ENCODE measurements at regions of chr1 and their contacts with region 1.

Region 1: DNA sequence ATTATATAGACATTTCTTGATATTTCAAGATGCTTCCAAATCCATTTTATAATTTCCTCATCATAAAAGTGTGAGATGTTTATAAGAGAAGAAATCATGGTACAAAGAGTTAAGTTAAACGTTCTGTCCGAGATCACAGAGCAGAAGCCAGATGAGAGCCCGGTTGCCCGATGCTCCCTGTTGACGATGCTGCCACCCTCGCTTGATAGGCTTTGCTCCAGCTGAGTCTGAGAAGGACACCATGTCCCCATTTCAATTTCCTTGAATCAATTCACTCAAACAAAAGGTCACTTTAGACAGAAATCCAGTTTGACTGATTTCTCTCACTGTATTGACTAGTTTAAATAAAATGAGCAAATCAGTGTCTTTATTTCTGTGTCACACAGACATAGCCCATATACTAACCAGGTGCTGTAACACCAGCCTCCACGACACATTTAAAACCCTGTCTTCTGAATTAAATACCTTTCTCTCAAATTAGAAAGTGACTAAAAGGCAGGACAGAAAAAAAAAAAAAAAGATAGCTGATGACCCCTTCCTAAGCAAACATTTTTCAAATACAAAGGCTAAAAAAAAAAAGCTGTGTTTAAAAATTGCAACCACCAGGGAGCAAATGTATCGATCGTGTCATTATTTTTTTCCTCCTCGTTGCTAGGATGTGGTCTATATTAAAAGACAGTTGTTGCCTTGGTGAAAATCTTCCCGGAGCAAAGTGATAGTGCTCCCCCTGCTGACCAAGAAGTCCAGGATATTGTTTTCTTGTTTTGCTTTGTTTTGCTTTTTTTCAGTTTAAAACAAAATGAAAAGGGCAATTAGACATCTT is 35.2 kb downstream of the DNASE2B start:
- DNase-seq: peak; percentile 70
- H3K4me3 Mint-ChIP-seq: no peak overlapping the region
- H3K27ac Mint-ChIP-seq: no peak overlapping the region
- H3K4me1 Mint-ChIP-seq: no peaks in the 10 kb centered on the region
- H3K27me3 Mint-ChIP-seq: no peaks in the 10 kb centered on the region
- CTCF ChIP-seq: peak; percentile 61

Region 2: DNA sequence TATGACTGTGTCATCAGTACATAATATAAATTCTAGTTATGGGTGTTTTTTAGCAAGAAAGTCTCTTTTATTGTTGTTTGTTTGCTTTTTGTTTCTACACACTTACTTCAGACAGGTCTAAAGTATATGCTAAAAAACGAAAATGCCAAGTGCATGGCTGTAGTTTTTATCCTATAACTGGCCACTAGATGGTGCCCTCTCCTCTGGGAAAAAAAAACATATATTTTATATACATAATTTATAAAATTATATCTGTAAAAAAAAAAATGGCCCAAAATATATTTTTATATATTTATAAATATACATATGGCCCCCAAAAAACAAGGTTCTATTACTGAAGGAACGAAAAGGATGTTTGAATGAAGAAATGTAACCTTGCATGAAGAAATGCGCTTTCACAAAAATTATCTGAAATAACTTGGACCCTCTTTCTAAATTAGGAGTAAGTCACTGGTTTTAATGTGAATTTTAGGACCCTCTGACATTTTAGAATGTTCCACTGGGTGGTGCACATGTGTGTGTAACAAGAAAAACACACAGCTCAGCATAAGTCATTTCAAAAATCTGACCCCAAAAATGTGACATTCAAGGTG is 528.1 kb before region 1 on chr1:
- CTCF ChIA-PET with region 1: interaction called, 4 read pairs
- POLR2A ChIA-PET with region 1: no interaction called
- intact Hi-C with region 1: loop called (anchors 2 kb)
- DNase-seq: peak; percentile 38
- H3K4me3 Mint-ChIP-seq: no peak overlapping the region
- H3K27ac Mint-ChIP-seq: no peak overlapping the region
- H3K4me1 Mint-ChIP-seq: peaks cover 25% of the 10 kb centered on the region
- H3K27me3 Mint-ChIP-seq: no peaks in the 10 kb centered on the region
- CTCF ChIP-seq: peak; percentile 68

Region 3: GRCh38 chr1:83931658-83932253 is 501.7 kb before region 1 on chr1:
- CTCF ChIA-PET with region 1: interaction called, 4 read pairs
- POLR2A ChIA-PET with region 1: interaction called, 3 read pairs
- intact Hi-C with region 1: loop called (anchors 1 kb)
- DNase-seq: peak; percentile 68
- H3K4me3 Mint-ChIP-seq: no peak overlapping the region
- H3K27ac Mint-ChIP-seq: no peak overlapping the region
- H3K4me1 Mint-ChIP-seq: no peaks in the 10 kb centered on the region
- H3K27me3 Mint-ChIP-seq: no peaks in the 10 kb centered on the region
- CTCF ChIP-seq: peak; percentile 62

Region 4: GRCh38 chr1:83998498-83999315 is 434.8 kb before region 1 on chr1 and contains the start of gene TTLL7:
- CTCF ChIA-PET with region 1: no interaction called
- POLR2A ChIA-PET with region 1: no interaction called
- intact Hi-C with region 1: loop called (anchors 10 kb)
- DNase-seq: peak; percentile 32
- H3K4me3 Mint-ChIP-seq: peak within 1 kb of the TSS; percentile 79
- H3K27ac Mint-ChIP-seq: peak within 1 kb of the TSS; percentile 85
- H3K4me1 Mint-ChIP-seq: no peaks in the 10 kb centered on the region
- H3K27me3 Mint-ChIP-seq: no peaks in the 10 kb centered on the region
- CTCF ChIP-seq: no peak
- total RNA-seq, gene TTLL7: 2.0 and 2.7 TPM in 2 replicates

Region 5: GRCh38 chr1:84143796-84144565 is 289.5 kb before region 1 on chr1 and contains the start of gene PRKACB:
- CTCF ChIA-PET with region 1: interaction called, 174 read pairs
- POLR2A ChIA-PET with region 1: interaction called, 4 read pairs
- intact Hi-C with region 1: loop called (anchors 1 kb)
- DNase-seq: peak; percentile 9
- H3K4me3 Mint-ChIP-seq: no peak within 1 kb of the TSS
- H3K27ac Mint-ChIP-seq: no peak within 1 kb of the TSS
- H3K4me1 Mint-ChIP-seq: no peaks in the 10 kb centered on the region
- H3K27me3 Mint-ChIP-seq: no peaks in the 10 kb centered on the region
- CTCF ChIP-seq: no peak
- total RNA-seq, gene PRKACB: 12.8 and 14.8 TPM in 2 replicates

Region 6: GRCh38 chr1:84298328-84298683 is 135.2 kb before region 1 on chr1:
- CTCF ChIA-PET with region 1: interaction called, 6 read pairs
- POLR2A ChIA-PET with region 1: interaction called, 3 read pairs
- intact Hi-C with region 1: loop called (anchors 5 kb)
- DNase-seq: peak; percentile 21
- H3K4me3 Mint-ChIP-seq: peak overlapping the region; percentile 84
- H3K27ac Mint-ChIP-seq: no peak overlapping the region
- H3K4me1 Mint-ChIP-seq: peaks cover 18% of the 10 kb centered on the region
- H3K27me3 Mint-ChIP-seq: no peaks in the 10 kb centered on the region
- CTCF ChIP-seq: no peak